ENCODE measurements at regions of chr7 and their contacts with region 1.

Region 1: DNA sequence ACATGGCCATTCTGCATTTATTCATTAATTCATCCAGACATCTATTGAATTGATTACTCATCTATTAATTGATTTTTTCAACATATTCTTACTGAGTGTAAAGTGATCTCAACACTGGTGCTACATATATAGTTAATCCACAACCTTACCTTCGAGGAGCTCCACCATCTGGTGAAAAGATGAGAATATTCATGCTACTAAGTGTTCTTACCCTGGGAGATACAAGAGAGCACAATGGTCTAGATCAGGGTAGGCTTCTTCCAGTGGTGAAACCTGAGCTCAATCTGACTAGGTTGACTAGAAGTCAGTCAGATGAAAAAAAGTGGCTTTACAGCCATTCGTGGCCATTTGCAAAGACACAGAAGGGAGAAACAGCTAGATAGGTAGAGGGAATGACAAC is 507.4 kb downstream of the ANKRD7 start:
- DNase-seq: no peak
- ATAC-seq: peak; percentile 78
- H3K4me3 ChIP-seq: no peak overlapping the region
- H3K27ac ChIP-seq: no peak overlapping the region
- H3K4me1 ChIP-seq: no peaks in the 10 kb centered on the region
- H3K27me3 ChIP-seq: no peaks in the 10 kb centered on the region
- CTCF ChIP-seq: no peak

Region 2: GRCh38 chr7:118264836-118265235 is 467.0 kb before region 1 on chr7:
- CTCF ChIA-PET with region 1: interaction called, 3 read pairs
- POLR2A ChIA-PET with region 1: no interaction called
- intact Hi-C with region 1: loop called (anchors 10 kb)
- DNase-seq: no peak
- ATAC-seq: no peak
- H3K4me3 ChIP-seq: no peak overlapping the region
- H3K27ac ChIP-seq: no peak overlapping the region
- H3K4me1 ChIP-seq: no peaks in the 10 kb centered on the region
- H3K27me3 ChIP-seq: no peaks in the 10 kb centered on the region
- CTCF ChIP-seq: no peak

Region 3: DNA sequence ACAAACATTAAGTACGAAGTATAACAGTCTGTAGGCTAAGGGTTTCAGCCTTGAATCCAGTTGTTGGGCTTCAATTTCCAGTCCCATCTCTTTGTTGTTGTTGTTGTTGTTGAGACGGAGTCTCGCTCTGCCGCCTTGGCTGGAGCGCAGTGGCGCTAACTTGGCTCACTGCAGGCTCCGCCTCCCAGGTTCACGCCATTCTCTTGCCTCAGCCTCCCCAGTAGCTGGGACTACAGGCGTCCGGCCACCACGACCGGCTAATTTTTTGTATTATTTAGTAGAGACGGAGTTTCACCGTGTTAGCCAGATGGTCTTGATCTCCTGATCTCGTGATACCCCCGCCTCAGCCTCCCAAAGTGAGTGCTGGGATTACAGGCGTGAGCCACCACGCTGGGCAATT is 42.5 kb before region 1 on chr7:
- CTCF ChIA-PET with region 1: no interaction called
- POLR2A ChIA-PET with region 1: no interaction called
- intact Hi-C with region 1: no loop called
- DNase-seq: no peak
- ATAC-seq: no peak
- H3K4me3 ChIP-seq: no peak overlapping the region
- H3K27ac ChIP-seq: no peak overlapping the region
- H3K4me1 ChIP-seq: no peaks in the 10 kb centered on the region
- H3K27me3 ChIP-seq: no peaks in the 10 kb centered on the region
- CTCF ChIP-seq: no peak

Region 4: GRCh38 chr7:119196183-119196582 is 464.3 kb after region 1 on chr7:
- CTCF ChIA-PET with region 1: no interaction called
- POLR2A ChIA-PET with region 1: no interaction called
- intact Hi-C with region 1: no loop called
- DNase-seq: no peak
- ATAC-seq: no peak; the same call in 1 of the 2 replicates
- H3K4me3 ChIP-seq: no peak overlapping the region
- H3K27ac ChIP-seq: no peak overlapping the region
- H3K4me1 ChIP-seq: no peaks in the 10 kb centered on the region
- H3K27me3 ChIP-seq: no peaks in the 10 kb centered on the region
- CTCF ChIP-seq: no peak

Measured in PC-3 (cell line).